ENCODE measurements at regions of chr16 and their contacts with region 1.

Region 1: GRCh38 chr16:67841764-67842508 is at the start of gene THAP11:
- DNase-seq: peak; percentile 99
- H3K4me3 Mint-ChIP-seq: peak within 1 kb of the TSS; percentile 93
- H3K27ac Mint-ChIP-seq: peak within 1 kb of the TSS; percentile 94
- H3K4me1 Mint-ChIP-seq: peaks cover 26% of the 10 kb centered on the region
- H3K27me3 Mint-ChIP-seq: no peaks in the 10 kb centered on the region
- total RNA-seq, gene THAP11: 46.4 and 48.7 TPM in 2 replicates

Region 2: DNA sequence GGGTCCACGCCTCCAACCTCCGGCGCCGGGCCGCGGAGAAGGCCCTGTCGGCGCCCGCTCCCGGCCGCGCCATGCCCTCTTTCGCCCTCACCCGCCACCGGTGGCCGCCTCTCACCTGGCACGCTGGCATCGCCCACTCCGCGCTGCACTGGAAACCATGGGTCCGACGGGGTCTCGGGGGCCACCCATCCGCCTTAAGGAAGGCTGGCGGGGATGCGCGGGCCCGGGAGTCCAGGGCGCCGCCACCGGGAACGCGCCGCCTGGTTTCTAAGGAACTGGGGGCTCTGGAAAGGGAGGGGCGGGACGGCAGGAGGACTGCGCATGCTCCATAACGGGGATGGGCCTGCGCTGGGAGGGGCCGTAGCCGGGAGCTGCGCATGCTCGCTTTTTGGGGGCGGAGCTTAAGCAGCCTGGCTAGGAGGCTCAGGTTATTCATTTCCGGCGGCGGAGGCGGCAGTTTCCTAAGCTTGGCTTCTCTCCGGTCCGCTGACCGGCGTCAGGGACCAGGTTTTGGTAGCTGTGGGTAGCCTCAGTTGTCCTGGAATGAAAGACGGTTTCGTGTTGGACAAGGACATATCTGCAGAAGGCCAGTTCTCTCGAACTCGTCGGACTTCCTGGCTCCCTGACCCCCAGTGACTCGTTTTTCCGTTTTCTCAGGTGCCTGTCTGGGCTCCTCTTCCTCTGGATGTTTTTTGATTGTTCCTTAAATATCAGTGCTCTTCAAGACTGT is 122.7 kb before region 1 on chr16 and contains the start of gene GFOD2:
- intact Hi-C with region 1: loop called (anchors 1 kb)
- DNase-seq: peak; percentile 100
- H3K4me3 Mint-ChIP-seq: peak within 1 kb of the TSS; percentile 88
- H3K27ac Mint-ChIP-seq: peak within 1 kb of the TSS; percentile 96
- H3K4me1 Mint-ChIP-seq: peaks cover 32% of the 10 kb centered on the region
- H3K27me3 Mint-ChIP-seq: no peaks in the 10 kb centered on the region
- total RNA-seq, gene GFOD2: 16.2 and 18.3 TPM in 2 replicates

Region 3: DNA sequence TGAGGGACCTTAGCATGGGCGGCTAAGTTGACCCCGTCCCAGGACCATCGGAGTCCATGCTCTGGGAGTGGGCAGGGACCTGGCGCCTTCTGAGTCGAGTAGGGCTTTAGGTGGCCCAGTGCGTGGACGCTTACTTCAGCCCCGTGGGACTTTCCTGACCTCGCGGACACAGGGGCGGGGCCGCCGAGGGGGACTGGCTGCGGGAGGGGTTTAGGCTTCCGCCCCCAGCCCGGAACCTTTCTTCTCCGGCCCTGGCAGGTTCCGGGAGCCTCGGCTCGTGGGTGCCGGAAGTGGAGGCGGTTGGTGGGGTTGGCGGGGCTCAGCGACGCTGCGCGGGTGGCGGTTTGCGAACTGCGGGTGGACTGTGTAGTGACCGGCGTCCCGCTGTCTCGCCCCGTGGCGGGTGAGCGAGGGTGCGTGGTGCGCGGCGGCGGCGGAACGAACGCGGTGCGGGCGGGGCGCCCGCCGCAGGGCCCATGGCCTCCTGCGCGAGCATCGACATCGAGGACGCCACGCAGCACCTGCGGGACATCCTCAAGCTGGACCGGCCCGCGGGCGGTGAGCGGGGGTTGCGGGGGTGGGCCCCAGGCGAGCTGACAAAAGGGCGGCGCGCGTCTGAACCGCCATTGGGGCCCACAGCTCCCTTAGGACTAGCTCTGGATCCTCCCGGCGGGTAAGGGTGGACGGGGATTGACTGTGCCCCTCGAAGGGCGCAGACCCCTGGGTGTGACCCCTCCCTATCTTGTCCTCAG is 31.0 kb after region 1 on chr16 and contains the start of gene EDC4:
- intact Hi-C with region 1: loop called (anchors 1 kb)
- DNase-seq: peak; percentile 98
- H3K4me3 Mint-ChIP-seq: peak within 1 kb of the TSS; percentile 86
- H3K27ac Mint-ChIP-seq: peak within 1 kb of the TSS; percentile 88
- H3K4me1 Mint-ChIP-seq: peaks cover 27% of the 10 kb centered on the region
- H3K27me3 Mint-ChIP-seq: no peaks in the 10 kb centered on the region
- total RNA-seq, gene EDC4: 112 and 122 TPM in 2 replicates

Region 4: DNA sequence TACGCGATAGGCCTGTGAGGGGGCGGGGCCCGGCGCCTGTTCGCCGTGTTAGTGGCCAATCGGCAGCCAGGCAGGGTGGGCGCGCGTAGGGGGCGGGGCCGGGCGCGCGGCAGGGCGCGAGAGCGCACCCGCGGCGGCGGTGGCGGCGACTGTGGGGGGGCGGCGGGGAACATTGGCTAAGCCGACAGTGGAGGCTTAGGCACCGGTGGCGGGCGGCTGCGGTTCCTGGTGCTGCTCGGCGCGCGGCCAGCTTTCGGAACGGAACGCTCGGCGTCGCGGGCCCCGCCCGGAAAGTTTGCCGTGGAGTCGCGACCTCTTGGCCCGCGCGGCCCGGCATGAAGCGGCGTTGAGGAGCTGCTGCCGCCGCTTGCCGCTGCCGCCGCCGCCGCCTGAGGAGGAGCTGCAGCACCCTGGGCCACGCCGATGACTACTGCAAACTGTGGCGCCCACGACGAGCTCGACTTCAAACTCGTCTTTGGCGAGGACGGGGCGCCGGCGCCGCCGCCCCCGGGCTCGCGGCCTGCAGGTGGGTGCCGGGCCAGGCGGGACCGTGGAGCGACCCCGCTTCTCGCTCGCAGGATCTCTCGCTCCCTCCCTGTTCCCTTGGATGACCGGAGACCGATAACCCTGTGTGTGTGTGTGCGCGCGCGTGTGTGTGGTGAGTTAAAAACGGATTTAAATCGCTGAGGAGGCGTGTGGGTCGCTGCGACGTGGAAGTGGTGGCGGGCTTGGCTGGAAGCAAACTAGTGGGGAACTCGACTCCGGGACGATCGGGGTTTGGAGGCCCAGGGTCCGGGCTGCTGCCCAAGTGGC is 243.5 kb after region 1 on chr16 and contains the start of gene NFATC3:
- intact Hi-C with region 1: loop called (anchors 1 kb)
- DNase-seq: peak; percentile 99
- H3K4me3 Mint-ChIP-seq: peak within 1 kb of the TSS; percentile 92
- H3K27ac Mint-ChIP-seq: peak within 1 kb of the TSS; percentile 97
- H3K4me1 Mint-ChIP-seq: peaks cover 58% of the 10 kb centered on the region
- H3K27me3 Mint-ChIP-seq: no peaks in the 10 kb centered on the region
- total RNA-seq, gene NFATC3: 143 and 146 TPM in 2 replicates